Spleen (tissue), 13 donors: ENCODE measurements at regions of chr15 and their contacts with region 1.

Region 1: DNA sequence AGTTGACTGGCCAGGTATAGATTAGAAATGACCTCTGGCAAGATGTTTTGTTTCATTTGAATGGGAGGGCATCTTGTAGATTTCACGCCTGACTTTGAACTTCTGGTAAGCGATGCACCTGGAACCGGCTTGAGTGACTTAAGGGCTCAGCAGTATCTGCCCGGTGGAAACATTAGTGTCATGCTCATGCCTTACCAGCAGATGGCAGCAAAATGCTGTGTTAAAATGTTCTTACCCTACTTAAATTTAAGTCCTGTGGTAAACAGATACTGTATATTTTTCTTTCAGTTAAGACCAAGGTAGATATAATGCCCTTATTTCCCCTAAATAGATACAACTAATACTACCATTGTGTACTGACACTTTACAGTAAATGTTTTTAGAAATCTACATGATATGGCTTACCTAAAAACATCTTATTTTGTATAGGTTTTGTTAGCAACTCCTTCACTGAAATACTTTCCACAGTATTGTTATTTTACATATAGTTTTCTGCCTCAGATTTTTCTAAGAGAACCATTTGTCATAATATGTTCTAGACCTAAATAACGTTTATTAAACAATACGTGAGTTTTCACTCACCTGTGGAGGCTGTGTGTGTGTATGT is 25.5 kb downstream of the ASB7 start:
- DNase-seq: no peak
- H3K4me3 ChIP-seq: no peak overlapping the region
- H3K27ac ChIP-seq: no peak overlapping the region
- H3K4me1 ChIP-seq: peaks cover 0 to 24% (median 3%) of the 10 kb centered on the region in 6 donors
- H3K27me3 ChIP-seq: no peaks in the 10 kb centered on the region
- CTCF ChIP-seq: peak; percentile 63 to 92 (median 85)
- POLR2A ChIP-seq: no peak

Region 2: DNA sequence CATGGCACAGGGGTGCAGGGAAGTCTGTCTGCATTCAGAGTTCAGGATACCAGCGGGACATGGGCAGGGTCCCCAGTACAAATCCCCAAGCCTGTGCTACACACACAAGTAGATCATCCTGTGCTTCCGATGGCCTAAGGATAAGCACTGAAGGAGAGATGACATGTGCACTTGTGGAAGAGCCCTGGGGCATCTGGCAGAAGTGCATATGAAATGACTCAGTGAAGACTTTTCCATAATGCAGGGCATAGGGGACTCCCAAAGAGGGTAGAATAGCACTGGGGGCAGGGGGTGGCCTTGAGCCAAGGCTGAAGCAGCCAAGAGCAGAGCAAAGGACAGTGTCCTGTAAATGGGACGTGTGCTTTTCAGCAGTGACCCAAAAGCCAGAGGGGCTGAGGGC is 309.0 kb before region 1 on chr15:
- intact Hi-C with region 1: no loop called
- DNase-seq: no peak
- H3K4me3 ChIP-seq: no peak overlapping the region
- H3K27ac ChIP-seq: no peak overlapping the region
- H3K4me1 ChIP-seq: no peaks in the 10 kb centered on the region
- H3K27me3 ChIP-seq: no peaks in the 10 kb centered on the region
- CTCF ChIP-seq: no peak
- POLR2A ChIP-seq: no peak

Region 3: DNA sequence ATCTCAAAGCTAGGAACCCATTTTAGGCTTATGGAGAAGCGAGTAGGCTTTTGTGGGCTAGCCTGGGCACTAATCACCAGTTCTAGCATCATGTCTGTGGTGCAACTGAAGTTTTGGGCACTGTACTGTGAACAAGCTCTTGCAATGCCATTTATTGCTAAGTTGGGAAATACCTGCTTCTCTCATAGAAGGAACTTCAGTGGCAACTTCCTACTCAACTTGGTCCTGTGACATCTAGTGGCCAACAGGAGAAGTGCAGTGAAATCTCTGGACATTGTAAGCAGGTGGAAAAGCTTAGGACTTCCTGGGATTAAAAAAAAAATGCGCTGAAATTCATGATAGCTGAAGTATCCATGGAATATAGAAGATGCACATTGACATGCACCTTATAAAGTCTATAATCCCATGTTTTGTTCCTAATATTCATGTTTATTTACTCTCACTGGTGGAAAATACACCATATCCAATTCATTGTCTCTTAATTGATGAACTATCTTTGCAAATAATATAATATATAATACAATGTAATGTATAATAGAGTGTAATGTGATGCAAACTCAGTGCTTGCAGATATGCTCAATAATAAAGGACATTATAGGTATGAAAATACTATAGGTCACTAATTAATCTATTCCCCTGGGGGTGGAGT is 245.3 kb after region 1 on chr15:
- intact Hi-C with region 1: loop called (anchors 5 kb)
- DNase-seq: no peak
- H3K4me3 ChIP-seq: no peak overlapping the region
- H3K27ac ChIP-seq: no peak overlapping the region
- H3K4me1 ChIP-seq: peaks cover 0 to 6% (median 0%) of the 10 kb centered on the region in 6 donors
- H3K27me3 ChIP-seq: peaks cover 0 to 32% (median 6%) of the 10 kb centered on the region in 7 donors
- CTCF ChIP-seq: peak; percentile 72 to 92 (median 88)
- POLR2A ChIP-seq: no peak

Region 4: DNA sequence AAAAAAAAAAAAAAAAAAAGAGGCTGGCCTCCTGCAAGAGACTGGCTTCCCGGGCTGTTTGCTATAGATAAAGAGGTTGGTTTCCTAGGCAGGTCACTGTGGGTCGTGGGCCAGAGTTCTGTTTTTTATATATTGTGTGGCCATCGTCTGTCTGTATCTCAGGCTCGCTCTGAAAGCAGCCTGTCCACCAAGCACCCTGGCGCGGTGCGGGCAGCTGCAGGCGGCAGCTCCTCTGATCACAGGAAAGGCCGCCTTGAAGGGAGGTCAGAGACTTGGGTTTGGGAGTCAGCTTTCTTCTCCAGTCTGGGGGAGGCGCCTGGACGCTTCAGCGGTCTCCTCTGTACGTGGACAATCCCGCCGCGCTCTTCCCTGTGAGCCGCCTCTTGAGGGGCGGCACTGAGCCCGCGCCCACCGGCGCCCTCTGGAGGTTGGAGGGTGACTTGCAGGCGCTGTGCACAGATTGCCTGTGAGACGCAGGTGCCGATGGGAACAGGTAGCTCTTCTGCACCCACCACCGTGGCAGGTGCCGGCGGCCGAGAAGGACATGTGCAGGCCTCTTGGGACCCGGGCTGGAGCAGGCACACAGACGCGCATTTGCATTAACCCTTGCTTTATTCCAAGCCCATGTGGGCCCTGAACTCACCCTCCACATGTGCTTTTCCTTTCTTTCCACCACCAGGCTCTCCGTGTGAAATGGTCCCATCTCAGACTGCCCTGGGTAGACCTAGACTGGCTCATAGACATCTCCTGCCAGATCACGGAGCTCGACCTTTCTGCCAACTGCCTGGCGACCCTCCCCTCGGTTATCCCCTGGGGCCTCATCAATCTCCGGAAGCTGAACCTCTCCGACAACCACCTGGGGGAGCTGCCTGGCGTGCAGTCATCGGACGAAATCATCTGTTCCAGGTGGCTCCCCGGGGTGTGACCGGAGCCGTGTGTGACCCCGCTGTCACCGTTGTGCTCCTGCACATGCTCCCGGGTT is 380.6 kb after region 1 on chr15:
- intact Hi-C with region 1: loop called (anchors 5 kb)
- DNase-seq: peak; percentile 97
- H3K4me3 ChIP-seq: peak overlapping the region; percentile 36 to 74 (median 47)
- H3K27ac ChIP-seq: peak overlapping the region in 5 of 8 donors; percentile 51 to 66 (median 55)
- H3K4me1 ChIP-seq: peaks cover 11 to 26% (median 22%) of the 10 kb centered on the region in 6 donors
- H3K27me3 ChIP-seq: no peaks in the 10 kb centered on the region
- CTCF ChIP-seq: peak; percentile 84 to 98 (median 96)
- POLR2A ChIP-seq: no peak

Region 5: DNA sequence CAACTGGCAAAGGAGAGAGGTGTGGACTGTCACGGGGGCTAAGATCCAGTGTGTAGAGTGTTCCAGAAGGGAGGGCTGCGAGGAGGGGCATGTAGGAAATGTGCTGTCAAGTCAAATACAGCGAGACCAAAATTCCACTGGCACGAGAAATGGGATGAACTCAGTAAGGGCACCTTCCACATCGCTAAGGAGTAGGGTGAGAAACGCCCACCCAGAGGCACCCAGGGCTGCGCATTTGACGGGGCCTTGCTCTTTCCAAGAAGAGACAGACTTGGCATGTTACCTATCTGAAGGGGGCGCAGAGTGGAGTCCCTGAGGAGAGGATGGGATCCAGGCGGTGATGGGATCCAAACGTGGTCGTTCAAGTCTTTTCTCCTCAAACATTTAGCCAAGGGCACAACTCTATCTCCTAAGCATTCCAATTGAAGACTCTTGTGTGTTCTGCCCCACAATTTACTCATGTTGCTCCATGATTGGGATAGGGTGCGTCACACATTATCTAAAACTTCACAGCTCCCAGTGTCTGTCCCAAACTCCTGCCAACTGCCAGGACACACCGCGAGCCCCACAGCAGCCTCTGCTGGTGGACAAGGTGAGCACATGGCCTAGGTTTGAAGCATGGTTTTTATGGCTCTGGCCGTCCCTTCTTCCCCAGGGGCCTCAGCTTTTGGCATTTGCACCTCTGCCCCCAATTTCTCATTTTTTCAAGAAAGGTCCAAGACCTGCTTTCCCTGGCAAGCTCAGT is 641.8 kb after region 1 on chr15:
- intact Hi-C with region 1: loop called (anchors 10 kb)
- DNase-seq: no peak
- H3K4me3 ChIP-seq: no peak overlapping the region
- H3K27ac ChIP-seq: no peak overlapping the region
- H3K4me1 ChIP-seq: peaks cover 4 to 26% (median 10%) of the 10 kb centered on the region in 6 donors
- H3K27me3 ChIP-seq: no peaks in the 10 kb centered on the region
- CTCF ChIP-seq: no peak
- POLR2A ChIP-seq: no peak